PC-3 (cell line): ENCODE measurements at regions of chr7 and their contacts with region 1.

Region 1: GRCh38 chr7:143214789-143215679 is 6.8 kb upstream of the TAS2R40 start:
- DNase-seq: peak; percentile 91
- ATAC-seq: peak; percentile 81
- H3K4me3 ChIP-seq: no peak overlapping the region
- H3K27ac ChIP-seq: no peak overlapping the region
- H3K4me1 ChIP-seq: no peaks in the 10 kb centered on the region
- H3K27me3 ChIP-seq: peaks cover 6% of the 10 kb centered on the region; the same call in 1 of the 2 replicates
- CTCF ChIP-seq: peak; percentile 100

Region 2: GRCh38 chr7:142603870-142604448 is 611.1 kb before region 1 on chr7:
- CTCF ChIA-PET with region 1: no interaction called
- POLR2A ChIA-PET with region 1: no interaction called
- intact Hi-C with region 1: loop called (anchors 10 kb)
- DNase-seq: peak; percentile 84
- ATAC-seq: peak; percentile 75
- H3K4me3 ChIP-seq: peak overlapping the region; percentile 74
- H3K27ac ChIP-seq: no peak overlapping the region
- H3K4me1 ChIP-seq: peaks cover 8% of the 10 kb centered on the region
- H3K27me3 ChIP-seq: no peaks in the 10 kb centered on the region
- CTCF ChIP-seq: peak; percentile 93

Region 3: DNA sequence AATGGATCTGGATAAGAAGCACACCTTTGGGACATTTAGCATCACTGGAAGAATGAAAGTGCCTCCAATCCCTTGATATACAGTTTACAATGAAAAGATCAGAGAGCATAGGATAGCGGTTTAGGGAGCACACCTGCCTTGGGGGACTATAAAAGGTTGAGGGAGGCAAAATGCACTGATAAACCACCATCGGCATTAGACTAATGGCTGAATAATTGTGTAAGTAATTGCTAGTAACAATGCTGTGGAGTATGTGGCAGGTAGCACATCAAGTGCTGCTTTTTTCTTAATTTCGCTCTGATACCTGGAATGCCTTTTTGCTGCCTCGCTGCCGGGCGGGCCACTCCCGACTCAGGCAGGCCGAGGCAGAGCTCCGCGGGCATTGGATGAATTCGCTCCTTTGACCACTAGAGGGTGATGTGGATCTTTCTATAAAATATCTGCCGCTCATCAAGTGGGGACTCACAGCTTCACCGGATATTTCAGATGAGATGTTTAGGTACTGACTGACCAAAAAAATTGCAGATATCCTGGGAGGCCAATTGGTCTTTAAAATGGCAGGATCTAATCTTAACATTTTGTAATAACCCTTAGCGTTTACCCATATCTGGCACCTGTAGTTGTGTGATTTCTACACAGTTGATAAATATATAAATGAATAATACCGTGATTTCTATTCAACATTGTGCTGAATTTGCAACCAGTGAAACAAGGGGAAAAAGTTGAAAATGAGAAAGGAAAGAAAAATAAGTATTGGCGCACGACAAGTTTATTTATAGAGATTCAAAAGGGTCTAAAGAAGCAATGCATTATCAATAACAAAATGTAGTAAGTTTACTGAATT is 582.5 kb before region 1 on chr7:
- CTCF ChIA-PET with region 1: interaction called, 3 read pairs
- POLR2A ChIA-PET with region 1: no interaction called
- intact Hi-C with region 1: loop called (anchors 10 kb)
- DNase-seq: peak; percentile 87
- ATAC-seq: peak; percentile 96
- H3K4me3 ChIP-seq: no peak overlapping the region
- H3K27ac ChIP-seq: no peak overlapping the region
- H3K4me1 ChIP-seq: no peaks in the 10 kb centered on the region; the same call in 1 of the 2 replicates
- H3K27me3 ChIP-seq: peaks cover 7% of the 10 kb centered on the region; the same call in 1 of the 2 replicates
- CTCF ChIP-seq: peak; percentile 83

Region 4: GRCh38 chr7:142880876-142881505 is 334.0 kb before region 1 on chr7:
- CTCF ChIA-PET with region 1: interaction called, 9 read pairs
- POLR2A ChIA-PET with region 1: no interaction called
- intact Hi-C with region 1: loop called (anchors 1 kb)
- DNase-seq: peak; percentile 68
- ATAC-seq: peak; percentile 42; the same call in 1 of the 2 replicates
- H3K4me3 ChIP-seq: no peak overlapping the region
- H3K27ac ChIP-seq: no peak overlapping the region
- H3K4me1 ChIP-seq: 0 out of 2 replicates have a peak, but pooled peaks cover 8% of the 10 kb centered on the region
- H3K27me3 ChIP-seq: peaks cover 22% of the 10 kb centered on the region
- CTCF ChIP-seq: peak; percentile 88

Region 5: DNA sequence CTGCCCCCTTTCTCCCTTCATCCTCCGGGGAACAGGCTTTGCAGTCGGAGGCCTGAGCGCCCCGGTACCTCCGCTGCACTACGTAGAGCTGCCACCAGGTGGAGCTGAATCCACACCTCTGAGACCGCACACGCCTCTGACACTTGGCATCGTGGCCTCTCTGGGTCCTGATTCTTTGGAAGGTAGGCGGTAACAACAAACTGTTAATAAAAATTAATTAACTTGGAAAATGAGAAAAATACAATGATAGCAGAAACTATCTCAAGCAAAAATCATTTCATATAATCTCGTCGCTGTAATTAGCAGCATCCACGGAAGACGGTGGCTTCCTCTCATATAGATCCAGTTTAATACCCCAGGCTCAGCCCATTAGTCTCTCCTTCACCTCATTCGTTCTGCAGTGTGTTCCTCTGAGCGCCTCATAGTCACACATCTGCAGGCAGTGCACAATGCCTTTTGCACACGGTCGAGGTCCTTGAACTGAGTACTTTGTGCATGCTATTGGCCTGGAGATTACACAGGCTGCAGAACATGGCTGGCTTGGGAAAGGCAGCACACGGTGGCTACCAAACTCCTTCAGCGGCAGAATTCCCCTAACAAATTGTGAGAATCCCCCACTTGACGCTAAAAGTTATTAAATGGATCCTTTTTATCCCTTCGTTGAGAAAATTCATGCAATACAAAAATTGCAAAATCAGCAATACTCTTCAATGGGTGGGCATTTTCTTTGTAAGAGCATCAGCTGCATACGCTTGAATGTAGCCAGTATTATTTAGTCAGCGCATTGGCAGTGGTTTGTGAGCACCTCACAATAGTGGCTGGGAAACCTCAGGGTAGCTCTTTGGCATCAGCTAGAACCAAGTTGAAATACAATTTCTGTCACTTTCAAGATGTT is 206.8 kb before region 1 on chr7:
- CTCF ChIA-PET with region 1: interaction called, 28 read pairs
- POLR2A ChIA-PET with region 1: no interaction called
- intact Hi-C with region 1: loop called (anchors 1 kb)
- DNase-seq: peak; percentile 81
- ATAC-seq: peak; percentile 84
- H3K4me3 ChIP-seq: no peak overlapping the region
- H3K27ac ChIP-seq: no peak overlapping the region
- H3K4me1 ChIP-seq: peaks cover under 1% of the 10 kb centered on the region
- H3K27me3 ChIP-seq: peaks cover 31% of the 10 kb centered on the region
- CTCF ChIP-seq: peak; percentile 87

Region 6: DNA sequence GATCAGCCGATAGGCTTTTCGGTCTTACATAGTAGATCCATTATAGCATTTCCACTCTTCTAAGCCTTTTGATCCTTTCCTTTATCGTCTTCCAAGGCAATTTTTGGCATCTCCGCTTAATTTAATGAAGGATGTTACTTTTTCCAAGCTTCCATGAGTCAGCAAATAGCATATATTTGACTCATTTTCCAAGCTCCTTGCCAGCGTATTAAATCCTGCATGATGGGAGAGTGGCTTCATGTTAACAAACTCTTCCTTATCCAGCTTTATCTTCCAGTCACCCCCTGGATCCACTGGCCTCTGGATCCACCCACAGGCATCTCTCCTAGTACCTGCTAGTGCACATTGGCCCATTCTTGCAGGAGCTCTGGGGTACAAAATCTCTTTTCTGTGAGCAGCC is 201.1 kb before region 1 on chr7:
- CTCF ChIA-PET with region 1: interaction called, 28 read pairs
- POLR2A ChIA-PET with region 1: no interaction called
- intact Hi-C with region 1: no loop called
- DNase-seq: peak; percentile 73
- ATAC-seq: peak; percentile 86
- H3K4me3 ChIP-seq: no peak overlapping the region
- H3K27ac ChIP-seq: no peak overlapping the region
- H3K4me1 ChIP-seq: peaks cover 15% of the 10 kb centered on the region
- H3K27me3 ChIP-seq: 0 out of 2 replicates have a peak, but pooled peaks cover 6% of the 10 kb centered on the region
- CTCF ChIP-seq: no peak

Region 7: GRCh38 chr7:143027683-143028082 is 187.4 kb before region 1 on chr7:
- CTCF ChIA-PET with region 1: no interaction called
- POLR2A ChIA-PET with region 1: no interaction called
- intact Hi-C with region 1: no loop called
- DNase-seq: no peak
- ATAC-seq: no peak
- H3K4me3 ChIP-seq: no peak overlapping the region
- H3K27ac ChIP-seq: no peak overlapping the region
- H3K4me1 ChIP-seq: no peaks in the 10 kb centered on the region
- H3K27me3 ChIP-seq: peaks cover 76% of the 10 kb centered on the region
- CTCF ChIP-seq: no peak